Esophagus squamous epithelium (tissue), 5 donors: ENCODE measurements at regions of chr12 and their contacts with region 1.

Region 1: DNA sequence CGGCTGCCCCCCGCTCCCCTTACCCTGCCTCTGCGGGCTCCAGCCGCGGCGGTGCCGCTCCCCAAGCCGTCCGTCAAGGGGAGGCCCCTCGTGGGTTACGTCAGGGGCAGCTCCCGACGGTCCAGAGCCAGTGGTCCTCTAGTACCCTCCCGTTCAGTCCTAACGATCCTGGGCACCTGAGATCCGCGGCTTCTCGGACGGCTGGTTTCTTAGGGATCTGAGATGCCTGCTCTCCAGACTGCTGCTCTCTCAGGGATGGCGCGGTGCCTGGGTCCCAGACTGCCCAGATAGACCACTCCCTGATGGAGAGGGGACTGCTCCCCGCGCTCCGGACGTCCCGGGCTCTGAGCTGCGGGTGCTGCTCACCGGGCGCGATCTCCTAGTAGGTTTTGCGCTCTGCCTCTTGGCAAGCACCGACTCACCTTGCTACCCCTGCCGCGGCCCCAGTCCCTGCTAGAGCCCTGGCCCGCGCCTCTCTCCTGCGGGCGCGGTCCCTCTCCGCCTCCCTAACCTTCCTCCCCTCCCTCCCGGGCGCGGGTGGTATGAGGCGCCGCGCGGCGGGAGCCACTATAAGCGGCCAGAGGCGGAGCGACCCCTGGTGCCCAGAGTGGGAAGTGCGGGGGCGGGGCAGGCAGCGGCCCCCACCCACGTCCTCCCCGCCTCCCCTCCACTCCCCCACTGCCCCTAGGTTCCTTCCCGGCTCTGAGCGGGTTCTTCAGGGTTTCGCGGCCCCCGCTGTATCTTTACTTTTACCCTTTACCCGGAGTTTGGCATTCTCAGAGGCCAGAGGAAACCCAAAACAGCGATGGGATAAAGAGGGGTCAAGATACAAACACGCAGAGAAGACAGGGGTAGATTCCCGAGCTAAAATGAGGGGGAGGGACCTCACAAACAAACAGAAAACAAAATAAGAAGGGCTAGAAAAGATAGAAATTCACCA is at the start of gene C1QL4:
- DNase-seq: no peak
- H3K4me3 ChIP-seq: peak within 1 kb of the TSS; percentile 24 to 65 (median 40)
- H3K27ac ChIP-seq: no peak within 1 kb of the TSS
- H3K4me1 ChIP-seq: peaks cover 10 to 31% (median 15%) of the 10 kb centered on the region in 3 donors
- H3K27me3 ChIP-seq: peaks cover 13 to 100% (median 28%) of the 10 kb centered on the region in 4 donors
- CTCF ChIP-seq: peak; percentile 68 to 99 (median 82)
- POLR2A ChIP-seq: no peak
- total RNA-seq, gene C1QL4: not detected

Region 2: DNA sequence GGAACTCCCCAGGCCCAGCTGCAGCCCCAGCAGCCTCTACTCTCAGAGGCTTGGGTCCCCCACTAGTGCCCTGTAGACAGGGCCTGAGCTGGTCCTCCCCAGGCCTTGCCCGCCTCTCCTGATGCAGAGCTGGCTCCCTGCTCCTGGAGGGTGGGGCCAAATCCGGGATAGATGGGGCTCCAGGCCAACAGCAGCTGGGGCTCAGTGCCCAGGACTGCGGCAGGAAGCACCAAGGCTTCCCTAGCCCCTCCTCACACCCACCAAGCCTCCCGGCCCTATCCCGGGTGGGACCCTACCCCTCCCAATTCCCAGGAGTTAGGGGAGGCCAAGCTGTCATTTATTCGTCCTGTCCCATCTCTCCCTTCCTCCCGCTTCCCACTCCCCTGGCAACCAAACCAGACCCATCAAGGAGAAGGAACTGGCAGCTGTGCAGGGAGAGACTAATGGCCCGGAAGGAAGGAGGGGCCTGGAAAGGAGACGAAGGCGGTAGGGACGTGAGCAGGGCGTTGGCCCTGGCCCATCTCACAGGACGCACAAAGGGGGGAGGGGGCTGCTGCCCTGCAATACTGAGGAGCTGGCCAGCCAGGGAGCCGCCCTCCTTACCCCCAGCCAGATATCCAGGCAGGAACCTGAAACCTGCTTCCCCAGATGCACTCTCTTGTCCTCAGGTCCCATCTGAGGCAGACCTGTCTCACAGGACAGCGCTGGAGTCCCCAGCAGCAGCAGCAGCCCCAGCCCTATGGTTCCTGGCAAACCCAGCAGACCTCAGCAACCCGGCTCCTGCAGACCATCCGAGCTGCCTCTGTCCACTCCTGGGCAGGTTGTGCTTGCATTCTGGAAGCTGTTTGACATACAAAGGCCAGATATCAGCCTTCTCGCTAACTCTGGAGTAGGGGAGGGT is 43.6 kb before region 1 on chr12:
- intact Hi-C with region 1: loop called (anchors 5 kb)
- DNase-seq: no peak
- H3K4me3 ChIP-seq: peak overlapping the region in 2 of 4 donors; percentile 23 to 45
- H3K27ac ChIP-seq: peak overlapping the region in 2 of 4 donors; percentile 11 to 20
- H3K4me1 ChIP-seq: peaks cover 27 to 53% (median 32%) of the 10 kb centered on the region in 3 donors
- H3K27me3 ChIP-seq: peaks cover 20 to 52% (median 30%) of the 10 kb centered on the region in 4 donors
- CTCF ChIP-seq: no peak
- POLR2A ChIP-seq: no peak